ENCODE measurements at regions of chr13 and their contacts with region 1.

Region 1: GRCh38 chr13:74204602-74205312 is 70.6 kb upstream of the KLF12 start:
- DNase-seq: no peak
- ATAC-seq: no peak
- H3K4me3 ChIP-seq: no peak overlapping the region
- H3K27ac ChIP-seq: no peak overlapping the region
- H3K4me1 ChIP-seq: peaks cover 0 to 5% (median 0%) of the 10 kb centered on the region in 9 donors
- H3K27me3 ChIP-seq: no peaks in the 10 kb centered on the region
- CTCF ChIP-seq: no peak

Region 2: DNA sequence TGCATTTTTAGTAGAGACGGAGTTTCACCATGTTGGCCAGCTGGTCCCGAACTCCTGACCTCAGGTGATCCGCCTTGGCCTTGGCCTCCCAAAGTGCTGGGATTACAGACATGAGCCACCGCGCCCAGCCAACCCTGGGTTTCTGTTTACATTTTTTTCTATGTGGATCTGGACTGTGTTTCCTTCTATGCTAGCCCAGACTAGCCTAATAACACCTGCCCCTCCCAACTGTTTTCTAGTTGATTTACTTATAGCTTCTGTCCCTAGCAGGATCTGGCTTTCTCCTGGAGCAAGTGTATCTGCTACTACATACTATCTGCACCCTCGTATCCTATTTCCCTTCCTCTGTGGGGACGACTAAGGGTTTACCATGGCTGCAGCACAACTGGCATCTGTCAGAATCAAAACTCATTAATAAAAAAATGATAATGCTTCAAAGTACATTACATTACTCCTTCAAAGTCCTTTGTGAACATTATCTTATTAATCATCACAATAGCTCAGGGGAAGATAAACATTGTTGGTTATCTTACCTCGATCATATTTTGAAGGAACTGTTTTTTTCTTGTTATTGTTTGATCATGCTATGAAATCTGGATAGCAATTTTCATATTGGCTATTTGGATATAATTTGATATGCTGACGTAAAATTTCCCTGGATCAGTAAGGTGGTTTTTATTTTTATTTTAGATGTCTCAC is 917.6 kb before region 1 on chr13:
- intact Hi-C with region 1: no loop called
- DNase-seq: no peak
- ATAC-seq: no peak
- H3K4me3 ChIP-seq: no peak overlapping the region
- H3K27ac ChIP-seq: no peak overlapping the region
- H3K4me1 ChIP-seq: no peaks in the 10 kb centered on the region
- H3K27me3 ChIP-seq: no peaks in the 10 kb centered on the region
- CTCF ChIP-seq: no peak

Region 3: GRCh38 chr13:74047939-74048600 is 156.7 kb before region 1 on chr13:
- intact Hi-C with region 1: no loop called
- DNase-seq: no peak
- ATAC-seq: peak in 6 of 8 donors; percentile 11 to 52 (median 37)
- H3K4me3 ChIP-seq: no peak overlapping the region
- H3K27ac ChIP-seq: peak overlapping the region in 1 of 10 donors; percentile 6
- H3K4me1 ChIP-seq: peaks cover 0 to 45% (median 18%) of the 10 kb centered on the region in 9 donors
- H3K27me3 ChIP-seq: no peaks in the 10 kb centered on the region
- CTCF ChIP-seq: no peak

Region 4: GRCh38 chr13:74226791-74227475 is 22.2 kb after region 1 on chr13:
- intact Hi-C with region 1: loop called in 1 of 10 experiments (anchors 2 kb)
- DNase-seq: no peak
- ATAC-seq: no peak
- H3K4me3 ChIP-seq: no peak overlapping the region
- H3K27ac ChIP-seq: no peak overlapping the region
- H3K4me1 ChIP-seq: no peaks in the 10 kb centered on the region
- H3K27me3 ChIP-seq: no peaks in the 10 kb centered on the region
- CTCF ChIP-seq: no peak